Activated CD4-positive, alpha-beta memory T cell treated with anti-CD3 and anti-CD28 coated beads, Interleukin-2, amount 10 ng/mL, durations not matched to agents 7 days and 5 days (primary cell): ENCODE measurements at regions of chr2 and their contacts with region 1.

Region 1: DNA sequence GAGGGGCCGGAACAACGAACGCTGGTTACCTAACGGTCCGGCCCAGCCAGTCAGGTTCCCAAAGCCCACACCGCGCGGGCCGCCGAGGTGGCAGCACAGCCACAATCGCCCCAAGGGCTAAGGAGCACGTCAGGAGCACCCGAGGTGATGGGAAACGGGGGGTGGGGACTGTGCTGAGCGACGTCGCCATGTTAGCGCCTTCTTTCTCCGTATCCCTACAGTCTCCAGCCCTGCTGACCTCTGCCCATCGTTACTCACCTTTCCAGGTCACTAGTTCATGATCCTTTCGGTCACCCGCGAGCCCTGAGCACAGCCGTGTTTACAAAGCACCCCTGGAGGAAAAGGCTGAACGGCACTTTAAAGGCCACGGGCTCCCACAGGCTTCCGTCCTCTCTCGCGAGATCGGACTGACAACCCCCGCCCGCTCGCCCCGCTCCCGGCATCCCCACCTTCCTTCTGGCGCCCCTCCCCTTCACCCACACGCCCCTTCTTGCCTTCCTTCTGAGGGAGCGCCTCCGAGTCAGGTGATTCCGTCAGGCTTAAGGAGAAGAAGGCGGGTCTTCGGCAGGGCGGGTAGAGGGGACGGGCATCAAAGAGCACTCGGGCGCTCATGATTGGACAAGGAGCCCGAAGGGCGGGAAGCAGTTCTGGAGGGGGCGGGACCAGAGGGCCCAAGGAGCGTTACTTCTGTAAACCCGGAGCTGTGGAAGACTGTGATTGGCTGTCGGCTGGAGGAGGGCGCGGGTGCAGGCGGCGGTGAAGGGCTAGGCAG is at the start of gene ATF2:
- DNase-seq: peak; percentile 99
- H3K4me3 Mint-ChIP-seq: peak within 1 kb of the TSS; percentile 100
- H3K27ac Mint-ChIP-seq: peak within 1 kb of the TSS; percentile 97
- H3K4me1 Mint-ChIP-seq: peaks cover 61% of the 10 kb centered on the region
- H3K27me3 Mint-ChIP-seq: no peaks in the 10 kb centered on the region
- total RNA-seq, gene ATF2: 61.4 to 63.6 TPM

Region 2: GRCh38 chr2:175181104-175181876 is 13.3 kb after region 1 on chr2 and contains the start of gene ATP5MC3:
- CTCF ChIA-PET with region 1: interaction called, 16 read pairs
- POLR2A ChIA-PET with region 1: interaction called, 73 read pairs
- DNase-seq: peak; percentile 94
- H3K4me3 Mint-ChIP-seq: peak within 1 kb of the TSS; percentile 91
- H3K27ac Mint-ChIP-seq: peak within 1 kb of the TSS; percentile 95
- H3K4me1 Mint-ChIP-seq: peaks cover 38% of the 10 kb centered on the region
- H3K27me3 Mint-ChIP-seq: no peaks in the 10 kb centered on the region
- total RNA-seq, gene ATP5MC3: 200 to 210 TPM

Region 3: DNA sequence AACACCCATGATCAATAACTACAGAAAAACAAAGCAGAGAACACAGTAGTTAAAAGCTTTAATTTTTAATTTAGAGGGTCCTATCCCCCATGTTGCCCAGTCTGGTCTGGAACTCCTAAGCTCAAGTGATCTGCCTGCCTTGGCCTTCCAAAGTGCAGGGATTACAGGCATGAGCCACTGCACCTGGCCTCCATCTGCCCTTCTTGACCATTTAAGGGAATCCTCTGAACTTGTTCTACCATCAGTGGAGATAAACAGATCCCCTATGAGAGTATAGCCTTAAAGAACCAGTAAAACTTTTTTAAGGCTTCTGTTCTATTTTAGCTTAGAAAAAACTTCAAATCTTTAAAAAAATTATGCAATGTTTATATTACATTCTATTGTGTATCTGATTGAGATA is 27.0 kb after region 1 on chr2:
- CTCF ChIA-PET with region 1: no interaction called
- POLR2A ChIA-PET with region 1: no interaction called
- DNase-seq: no peak
- H3K4me3 Mint-ChIP-seq: no peak overlapping the region
- H3K27ac Mint-ChIP-seq: no peak overlapping the region
- H3K4me1 Mint-ChIP-seq: peaks cover 3% of the 10 kb centered on the region
- H3K27me3 Mint-ChIP-seq: peaks cover 37% of the 10 kb centered on the region